ENCODE measurements at regions of chr5 and their contacts with region 1.

Region 1: GRCh38 chr5:157718519-157718918 is 12.7 kb upstream of the THG1L start:
- DNase-seq: no peak
- H3K4me3 ChIP-seq: no peak overlapping the region
- H3K27ac ChIP-seq: no peak overlapping the region
- H3K4me1 ChIP-seq: peaks cover 0 to 4% (median 0%) of the 10 kb centered on the region in 4 donors
- H3K27me3 ChIP-seq: no peaks in the 10 kb centered on the region
- CTCF ChIP-seq: peak; percentile 62 to 76

Region 2: GRCh38 chr5:157331807-157332206 is 386.7 kb before region 1 on chr5:
- intact Hi-C with region 1: loop called (anchors 5 kb)
- DNase-seq: no peak
- H3K4me3 ChIP-seq: no peak overlapping the region
- H3K27ac ChIP-seq: no peak overlapping the region
- H3K4me1 ChIP-seq: no peaks in the 10 kb centered on the region
- H3K27me3 ChIP-seq: no peaks in the 10 kb centered on the region
- CTCF ChIP-seq: no peak

Region 3: GRCh38 chr5:157366741-157367674 is 351.5 kb before region 1 on chr5:
- intact Hi-C with region 1: loop called (anchors 1 kb)
- DNase-seq: peak in 1 of 2 donors; percentile 46
- H3K4me3 ChIP-seq: no peak overlapping the region
- H3K27ac ChIP-seq: peak overlapping the region in 1 of 2 donors; percentile 58
- H3K4me1 ChIP-seq: peaks cover 0 to 34% (median 3%) of the 10 kb centered on the region in 4 donors
- H3K27me3 ChIP-seq: no peaks in the 10 kb centered on the region
- CTCF ChIP-seq: peak; percentile 71 to 76

Region 4: DNA sequence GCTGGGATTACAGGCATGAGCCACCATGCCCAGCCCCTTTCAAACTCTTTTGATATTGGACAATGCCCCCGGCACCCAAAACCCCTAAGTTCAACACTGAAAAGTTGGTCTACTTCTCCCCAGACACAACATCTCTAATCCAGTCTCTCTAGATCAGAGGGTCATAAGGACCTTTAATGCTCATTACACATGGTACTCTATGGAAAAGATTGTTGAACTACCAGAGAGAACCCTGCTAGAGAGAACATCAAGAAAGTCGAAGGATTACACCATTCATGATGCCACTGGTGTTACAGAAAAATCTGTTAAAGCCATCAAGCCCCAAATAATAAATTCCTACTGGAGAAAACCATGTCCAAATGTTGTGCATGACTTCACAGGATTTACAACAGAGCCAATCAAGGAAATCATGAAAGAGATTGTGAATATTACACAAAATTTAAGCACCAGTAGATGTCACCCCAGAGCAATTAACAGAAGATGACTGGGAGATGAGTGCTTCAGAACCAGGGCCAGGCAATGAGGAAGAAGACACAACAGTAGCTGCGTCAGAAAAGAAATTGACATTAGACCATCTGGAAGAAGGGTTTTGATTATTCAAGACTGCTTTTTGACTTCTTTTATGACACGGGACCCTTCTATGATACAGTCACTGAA is 286.8 kb before region 1 on chr5:
- intact Hi-C with region 1: loop called (anchors 5 kb)
- DNase-seq: no peak
- H3K4me3 ChIP-seq: no peak overlapping the region
- H3K27ac ChIP-seq: no peak overlapping the region
- H3K4me1 ChIP-seq: no peaks in the 10 kb centered on the region
- H3K27me3 ChIP-seq: no peaks in the 10 kb centered on the region
- CTCF ChIP-seq: peak; percentile 42 to 64

Region 5: GRCh38 chr5:157476702-157477408 is 241.7 kb before region 1 on chr5:
- intact Hi-C with region 1: loop called (anchors 5 kb)
- DNase-seq: no peak
- H3K4me3 ChIP-seq: no peak overlapping the region
- H3K27ac ChIP-seq: no peak overlapping the region
- H3K4me1 ChIP-seq: peaks cover 0 to 42% (median 11%) of the 10 kb centered on the region in 4 donors
- H3K27me3 ChIP-seq: no peaks in the 10 kb centered on the region
- CTCF ChIP-seq: peak; percentile 73

Region 6: DNA sequence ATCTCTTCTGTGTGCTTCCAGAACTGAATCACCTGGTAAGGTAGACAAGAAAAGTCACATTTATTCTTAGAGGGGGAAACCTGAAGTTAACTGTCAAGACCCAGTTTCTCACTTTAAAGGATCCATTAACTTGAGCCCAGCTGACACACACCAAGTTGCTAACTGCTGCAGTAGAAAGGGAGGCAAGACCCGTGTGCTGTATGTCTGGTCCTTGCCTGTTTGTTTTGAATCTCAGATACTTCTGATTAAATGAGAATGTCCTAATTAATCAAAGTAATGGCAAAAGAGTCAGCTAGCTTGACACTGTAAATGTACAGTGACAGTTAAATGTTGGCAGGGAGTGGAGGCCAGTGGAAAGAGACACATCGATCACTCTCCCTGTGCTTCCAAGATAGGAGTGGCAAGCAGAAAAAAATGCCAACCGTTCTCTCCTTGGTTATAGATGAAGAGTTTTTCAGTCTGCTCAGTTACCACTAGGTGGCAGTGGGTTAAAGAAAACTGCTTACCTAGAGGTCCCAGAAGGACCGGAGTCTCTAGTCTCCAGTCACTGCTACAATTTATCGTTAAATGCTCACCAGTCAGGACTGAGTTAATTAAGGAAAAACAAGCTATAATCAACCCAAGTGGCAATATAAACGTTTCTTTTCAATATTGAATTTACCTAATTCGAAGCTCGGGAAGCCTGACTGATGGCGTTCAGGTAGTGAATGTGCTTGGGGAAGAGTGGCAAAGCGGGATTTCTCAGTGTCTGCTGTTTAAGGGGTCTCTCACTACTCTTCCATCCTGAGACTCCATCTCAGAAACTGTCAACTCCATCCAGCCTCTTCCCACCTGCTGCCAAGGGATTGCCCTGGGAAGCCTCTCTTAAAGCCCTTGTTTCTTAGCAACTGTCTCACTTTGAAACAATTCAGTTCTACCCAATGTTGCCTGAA is 43.4 kb after region 1 on chr5:
- intact Hi-C with region 1: no loop called
- DNase-seq: no peak
- H3K4me3 ChIP-seq: no peak overlapping the region
- H3K27ac ChIP-seq: no peak overlapping the region
- H3K4me1 ChIP-seq: no peaks in the 10 kb centered on the region
- H3K27me3 ChIP-seq: no peaks in the 10 kb centered on the region
- CTCF ChIP-seq: peak; percentile 68 to 78

Measured in tibial artery (tissue), 4 donors.